H1 (cell line): ENCODE measurements at regions of chr22 and their contacts with region 1.

Region 1: GRCh38 chr22:31616315-31617001 is 45.6 kb downstream of the PISD start:
- DNase-seq: no peak
- H3K4me3 ChIP-seq: no peak overlapping the region
- H3K27ac ChIP-seq: no peak overlapping the region
- H3K4me1 ChIP-seq: no peaks in the 10 kb centered on the region; a peak in 2 of 7 replicates
- H3K27me3 ChIP-seq: no peaks in the 10 kb centered on the region
- CTCF ChIP-seq: no peak
- EP300 ChIP-seq: no peak
- POLR2A ChIP-seq: peak in 1 of 2 experiments; percentile 22; a peak in 1 of 3 replicates
- RAD21 ChIP-seq: no peak

Region 2: DNA sequence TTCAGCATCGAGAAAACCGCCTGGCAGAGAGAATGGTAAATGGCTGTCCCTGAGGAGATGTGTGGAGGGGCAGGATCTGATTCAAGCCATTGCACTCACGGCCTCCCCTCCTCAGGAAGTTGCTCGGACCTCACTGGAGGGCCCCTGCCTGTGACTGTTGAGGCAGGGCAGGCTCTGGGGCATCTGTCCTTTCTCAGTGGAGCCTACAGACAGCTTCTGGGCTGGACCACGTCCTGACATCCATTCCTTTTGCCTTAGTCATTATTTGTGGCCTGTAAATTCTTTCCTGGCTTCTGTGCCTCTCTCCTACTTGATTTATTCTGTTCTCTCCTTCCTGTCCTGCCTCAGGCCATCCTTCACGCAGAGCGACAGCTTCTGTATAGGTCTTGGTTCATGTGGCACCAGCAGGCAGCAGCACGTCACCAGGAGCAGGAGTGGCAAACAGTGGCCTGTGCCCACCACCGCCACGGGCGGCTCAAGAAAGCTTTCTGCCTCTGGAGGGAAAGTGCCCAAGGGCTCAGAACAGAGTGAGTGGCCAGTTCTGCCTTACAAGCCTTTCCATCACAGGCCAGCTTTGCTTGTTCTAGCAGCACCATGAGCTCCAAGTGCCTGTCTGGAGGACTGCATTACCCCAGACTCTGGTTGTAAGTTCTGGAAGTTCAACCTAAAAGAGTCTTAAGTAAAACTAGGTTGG is 14.1 kb before region 1 on chr22:
- CTCF ChIA-PET with region 1: interaction called, 13 read pairs
- POLR2A ChIA-PET with region 1: interaction called, 30 read pairs
- DNase-seq: no peak
- H3K4me3 ChIP-seq: no peak overlapping the region
- H3K27ac ChIP-seq: no peak overlapping the region
- H3K4me1 ChIP-seq: no peaks in the 10 kb centered on the region
- H3K27me3 ChIP-seq: no peaks in the 10 kb centered on the region
- CTCF ChIP-seq: no peak
- EP300 ChIP-seq: no peak
- POLR2A ChIP-seq: no peak
- RAD21 ChIP-seq: no peak

Region 3: DNA sequence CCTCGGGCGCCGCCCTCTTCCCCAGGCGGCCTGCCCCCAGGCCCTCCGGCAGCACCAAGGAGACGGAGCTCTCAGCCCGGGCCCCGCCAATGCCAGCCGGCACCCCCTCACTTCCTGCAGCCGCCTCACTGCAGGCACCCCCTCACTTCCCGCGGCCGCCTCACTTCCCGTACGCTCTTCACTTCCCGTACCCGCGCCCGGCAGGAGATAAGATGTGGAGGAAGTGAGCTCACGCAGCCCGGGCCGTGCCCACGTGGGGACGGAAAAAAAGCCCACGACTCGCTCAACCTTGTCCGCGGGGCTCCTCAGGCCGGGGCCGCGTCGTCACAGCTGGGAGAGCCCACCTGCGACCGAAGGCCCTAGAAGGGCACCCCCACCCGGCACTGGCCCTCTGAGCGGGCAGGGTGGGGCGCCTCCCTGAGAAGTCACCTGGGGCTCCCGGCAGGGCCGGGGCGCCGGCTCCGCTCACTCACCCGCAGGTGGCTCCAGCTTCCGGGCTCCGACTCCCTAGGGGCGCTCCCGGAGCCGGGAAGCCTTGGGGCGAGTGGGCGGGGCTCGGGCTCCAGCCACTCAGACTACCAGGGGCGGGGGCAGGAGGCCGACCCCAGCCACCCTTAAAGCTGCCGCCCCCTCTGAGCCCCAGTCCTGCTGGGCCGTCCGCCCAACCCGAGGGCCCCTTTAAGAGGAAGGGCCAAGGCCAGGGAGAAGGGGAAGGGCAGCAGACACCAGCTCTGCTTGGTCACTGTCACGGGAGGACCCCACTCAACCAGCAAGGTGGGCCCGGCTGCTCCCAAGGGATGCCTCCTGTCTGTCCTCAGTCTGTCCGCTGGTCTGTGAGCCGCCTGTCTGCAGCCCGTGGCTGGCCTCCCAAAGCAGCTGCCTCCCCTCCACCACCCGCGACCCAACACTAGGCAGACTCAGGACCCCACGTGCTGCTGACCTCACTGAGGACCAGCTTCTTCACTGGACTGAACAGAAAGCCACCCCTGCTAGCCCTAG is 14.2 kb after region 1 on chr22:
- CTCF ChIA-PET with region 1: interaction called, 12 read pairs
- POLR2A ChIA-PET with region 1: interaction called, 17 read pairs
- DNase-seq: peak; percentile 53 to 88
- H3K4me3 ChIP-seq: peak overlapping the region; percentile 58 to 97 (median 60)
- H3K27ac ChIP-seq: no peak overlapping the region
- H3K4me1 ChIP-seq: peaks cover 5 to 31% (median 23%) of the 10 kb centered on the region in 4 experiments
- H3K27me3 ChIP-seq: no peaks in the 10 kb centered on the region
- CTCF ChIP-seq: no peak
- EP300 ChIP-seq: no peak
- POLR2A ChIP-seq: no peak; a peak in 1 of 3 replicates
- RAD21 ChIP-seq: no peak